Activated CD8-positive, alpha-beta T cell treated with anti-CD3 and anti-CD28 coated beads, Interleukin-2, amount 10 ng/mL, durations not matched to agents 7 days and 5 days (primary cell): ENCODE measurements at regions of chr16 and their contacts with region 1.

Region 1: GRCh38 chr16:57141822-57142631 is 43.8 kb downstream of the PSME3IP1 start:
- DNase-seq: no peak
- ATAC-seq: peak; percentile 71
- H3K4me3 Mint-ChIP-seq: no peak overlapping the region
- H3K27ac Mint-ChIP-seq: peak overlapping the region; percentile 76
- H3K4me1 Mint-ChIP-seq: peaks cover 39% of the 10 kb centered on the region
- H3K27me3 Mint-ChIP-seq: no peaks in the 10 kb centered on the region

Region 2: DNA sequence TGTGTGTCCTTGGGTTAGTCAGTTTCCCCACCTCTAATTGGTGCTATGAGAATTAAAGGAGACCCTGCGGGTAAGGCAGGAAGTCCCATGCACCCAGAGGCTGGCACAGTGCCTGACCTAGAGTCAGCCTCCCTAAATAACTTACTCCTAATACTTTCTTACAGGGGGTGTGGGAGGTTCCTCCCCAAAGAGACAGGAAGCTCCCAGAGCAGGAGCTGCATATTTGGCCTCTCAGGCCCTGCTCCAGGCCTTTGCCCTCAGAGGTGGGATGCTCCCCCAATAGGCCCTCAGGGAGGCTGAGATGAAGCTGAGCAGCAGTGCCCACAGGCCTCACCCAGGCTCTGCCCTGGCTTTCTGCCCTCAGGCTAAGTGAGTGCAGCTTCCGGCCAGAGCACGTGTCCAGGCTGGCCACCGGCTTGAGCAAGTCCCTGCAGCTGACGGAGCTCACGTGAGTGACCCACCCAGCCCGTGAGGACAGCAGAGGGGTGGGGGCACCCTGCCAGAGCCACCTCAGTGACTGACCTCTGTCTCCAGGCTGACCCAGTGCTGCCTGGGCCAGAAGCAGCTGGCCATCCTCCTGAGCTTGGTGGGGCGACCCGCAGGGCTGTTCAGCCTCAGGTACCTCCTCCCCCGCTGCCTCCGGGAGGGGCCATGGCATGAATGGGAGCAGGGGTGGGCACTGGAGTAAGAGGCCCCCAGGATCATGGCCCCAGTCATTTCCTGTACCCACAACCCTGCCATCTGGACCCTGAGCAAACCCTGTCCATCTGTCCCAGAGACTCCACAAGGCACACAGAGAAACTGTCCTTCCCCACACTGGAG is 80.7 kb before region 1 on chr16:
- CTCF ChIA-PET with region 1: no interaction called
- POLR2A ChIA-PET with region 1: no interaction called
- DNase-seq: no peak
- ATAC-seq: peak; percentile 25
- H3K4me3 Mint-ChIP-seq: no peak overlapping the region
- H3K27ac Mint-ChIP-seq: peak overlapping the region; percentile 50
- H3K4me1 Mint-ChIP-seq: peaks cover 16% of the 10 kb centered on the region
- H3K27me3 Mint-ChIP-seq: no peaks in the 10 kb centered on the region

Region 3: GRCh38 chr16:57115514-57116182 is 26.4 kb before region 1 on chr16:
- CTCF ChIA-PET with region 1: no interaction called
- POLR2A ChIA-PET with region 1: no interaction called
- DNase-seq: no peak
- ATAC-seq: no peak
- H3K4me3 Mint-ChIP-seq: no peak overlapping the region
- H3K27ac Mint-ChIP-seq: no peak overlapping the region
- H3K4me1 Mint-ChIP-seq: peaks cover 2% of the 10 kb centered on the region
- H3K27me3 Mint-ChIP-seq: no peaks in the 10 kb centered on the region

Region 4: DNA sequence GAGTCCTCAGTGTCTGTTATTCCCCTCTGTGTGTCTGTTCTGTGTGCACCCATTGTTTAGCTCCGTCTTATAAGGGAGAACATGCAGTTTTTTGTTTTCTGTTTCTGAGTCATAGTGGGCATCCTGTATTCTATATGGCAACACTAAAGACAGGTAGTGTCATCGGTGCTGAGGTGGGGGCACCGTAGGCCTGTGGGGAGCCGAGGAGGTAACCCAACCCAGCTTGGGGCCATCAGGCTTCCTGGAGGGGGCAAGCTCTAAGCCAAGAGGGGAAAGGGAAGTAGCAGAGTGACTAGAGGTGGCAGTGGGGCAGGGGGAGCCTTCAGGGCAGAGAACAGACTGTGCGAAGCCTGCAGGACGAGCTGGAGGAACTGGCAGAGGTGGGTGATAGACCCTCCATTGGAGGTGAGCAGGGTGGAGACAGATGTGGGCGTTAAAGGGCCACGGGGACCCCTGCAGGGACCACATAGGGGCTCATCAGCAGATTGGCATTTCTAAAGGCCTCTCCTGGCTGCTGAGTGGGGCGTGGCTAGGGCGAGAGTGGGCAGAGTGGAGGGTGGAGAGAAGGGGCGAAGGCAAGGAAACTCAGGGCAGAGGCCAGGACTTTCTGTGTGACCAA is 13.1 kb before region 1 on chr16:
- CTCF ChIA-PET with region 1: interaction called, 13 read pairs
- POLR2A ChIA-PET with region 1: interaction called, 9 read pairs
- DNase-seq: peak; percentile 83
- ATAC-seq: peak; percentile 75
- H3K4me3 Mint-ChIP-seq: peak overlapping the region; percentile 71
- H3K27ac Mint-ChIP-seq: peak overlapping the region; percentile 96
- H3K4me1 Mint-ChIP-seq: peaks cover 86% of the 10 kb centered on the region
- H3K27me3 Mint-ChIP-seq: no peaks in the 10 kb centered on the region